Ovary (tissue), 10 donors: ENCODE measurements at regions of chr5 and their contacts with region 1.

Region 1: GRCh38 chr5:114940709-114941108 is 229.0 kb downstream of the TRIM36 start:
- DNase-seq: no peak
- H3K4me3 ChIP-seq: no peak overlapping the region
- H3K27ac ChIP-seq: no peak overlapping the region
- H3K4me1 ChIP-seq: no peaks in the 10 kb centered on the region
- H3K27me3 ChIP-seq: no peaks in the 10 kb centered on the region
- CTCF ChIP-seq: no peak
- EP300 ChIP-seq: no peak
- POLR2A ChIP-seq: no peak

Region 2: DNA sequence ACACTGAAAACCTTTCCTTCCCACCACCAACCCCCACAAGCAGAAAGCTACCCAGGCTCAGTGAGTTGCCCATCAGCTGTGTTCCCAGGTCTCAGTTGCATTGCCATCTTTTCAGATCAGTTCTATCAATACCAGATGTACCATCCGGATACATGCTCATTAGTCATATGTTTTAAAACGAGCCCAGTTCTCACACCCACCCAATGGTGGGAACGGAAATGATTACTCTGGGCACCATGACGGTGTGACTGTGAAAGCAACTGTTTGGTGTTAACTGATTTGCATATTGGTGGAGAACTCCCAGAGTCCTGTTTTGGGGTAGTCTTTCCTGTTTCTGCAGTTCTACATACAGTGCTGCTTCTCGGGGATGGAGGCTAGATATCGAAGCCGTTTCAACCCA is 16.7 kb after region 1 on chr5:
- intact Hi-C with region 1: loop called in 1 of 4 experiments (anchors 1 kb)
- DNase-seq: no peak
- H3K4me3 ChIP-seq: no peak overlapping the region
- H3K27ac ChIP-seq: no peak overlapping the region
- H3K4me1 ChIP-seq: no peaks in the 10 kb centered on the region
- H3K27me3 ChIP-seq: no peaks in the 10 kb centered on the region
- CTCF ChIP-seq: no peak
- EP300 ChIP-seq: no peak
- POLR2A ChIP-seq: no peak

Region 3: DNA sequence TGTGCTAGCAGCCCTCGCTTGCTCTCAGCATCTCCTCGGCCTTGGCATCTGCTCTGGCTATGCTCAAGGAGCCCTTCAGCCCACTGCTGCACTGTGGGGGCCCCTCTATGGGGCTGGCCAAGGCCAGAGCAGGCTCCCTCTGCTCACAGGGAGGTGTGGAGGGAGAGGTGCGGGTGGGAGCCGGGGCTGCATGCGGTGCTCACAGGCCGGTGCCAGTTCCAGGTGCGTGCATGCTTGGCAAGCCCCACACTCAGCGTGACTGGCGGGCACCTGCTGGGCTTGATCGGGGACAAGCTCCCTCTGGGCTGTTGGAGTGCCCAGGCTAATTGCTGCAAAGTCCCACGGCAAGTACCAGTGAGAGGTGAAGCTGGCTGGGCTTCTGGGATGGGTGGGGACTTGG is 58.5 kb after region 1 on chr5:
- intact Hi-C with region 1: no loop called
- DNase-seq: peak in 1 of 5 donors; percentile 28
- H3K4me3 ChIP-seq: no peak overlapping the region
- H3K27ac ChIP-seq: no peak overlapping the region
- H3K4me1 ChIP-seq: no peaks in the 10 kb centered on the region
- H3K27me3 ChIP-seq: no peaks in the 10 kb centered on the region
- CTCF ChIP-seq: no peak
- EP300 ChIP-seq: no peak
- POLR2A ChIP-seq: no peak